Activated CD4-positive, alpha-beta T cell treated with anti-CD3 and anti-CD28 coated beads, Interleukin-2, amount 10 ng/mL, durations not matched to agents 24 days and 14 days (primary cell): ENCODE measurements at regions of chr12 and their contacts with region 1.

Region 1: DNA sequence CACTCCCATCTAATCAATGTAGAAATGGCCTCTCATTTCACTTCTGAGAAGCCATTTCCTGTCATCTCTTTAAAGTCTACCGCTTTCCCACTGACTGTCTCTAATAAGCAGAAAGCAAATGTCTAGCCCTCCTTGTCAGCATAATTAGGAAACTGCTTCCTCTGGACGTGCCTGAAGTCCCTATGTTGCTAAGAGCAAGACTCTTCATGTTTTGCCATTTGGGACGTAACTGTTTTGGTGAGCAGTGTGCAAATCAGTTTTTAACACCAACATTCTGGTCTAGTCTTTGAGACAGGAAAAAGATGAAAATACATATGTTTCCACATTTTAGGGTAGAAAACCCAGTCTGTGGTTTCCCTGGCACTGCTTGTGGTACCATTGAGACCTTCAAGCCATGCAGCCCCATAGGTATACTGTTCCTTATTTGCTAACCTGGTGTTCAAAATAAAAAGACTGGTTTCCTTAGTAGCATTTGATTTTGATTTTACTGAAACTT is 22.2 kb downstream of the IFNG start:
- DNase-seq: peak; percentile 65
- H3K4me3 Mint-ChIP-seq: peak overlapping the region; percentile 53
- H3K27ac Mint-ChIP-seq: peak overlapping the region; percentile 89
- H3K4me1 Mint-ChIP-seq: peaks cover 65% of the 10 kb centered on the region
- H3K27me3 Mint-ChIP-seq: no peaks in the 10 kb centered on the region

Region 2: DNA sequence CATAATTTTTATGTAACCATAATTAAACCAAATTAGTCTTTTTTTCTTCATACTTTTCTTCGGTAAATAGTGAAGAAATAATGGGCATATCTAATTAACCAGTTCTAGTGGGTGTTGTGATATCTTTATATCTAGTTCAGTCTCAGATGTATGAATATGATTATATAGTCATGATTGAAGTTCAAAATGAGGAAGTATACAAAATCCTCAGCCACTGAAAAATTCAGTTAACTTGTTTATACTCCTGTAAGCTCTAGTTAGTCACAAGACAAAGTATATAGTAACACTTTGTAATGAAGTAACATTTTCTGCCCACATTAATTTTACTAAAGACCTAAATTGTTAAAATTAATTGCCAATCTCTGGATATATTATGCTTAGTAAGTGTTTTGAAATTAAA is 821.7 kb before region 1 on chr12:
- intact Hi-C with region 1: no loop called
- DNase-seq: no peak
- H3K4me3 Mint-ChIP-seq: no peak overlapping the region
- H3K27ac Mint-ChIP-seq: no peak overlapping the region
- H3K4me1 Mint-ChIP-seq: peaks cover 6% of the 10 kb centered on the region
- H3K27me3 Mint-ChIP-seq: no peaks in the 10 kb centered on the region

Region 3: GRCh38 chr12:68080577-68080976 is 56.8 kb before region 1 on chr12:
- intact Hi-C with region 1: loop called (anchors 5 kb)
- DNase-seq: peak; percentile 79
- H3K4me3 Mint-ChIP-seq: peak overlapping the region; percentile 59
- H3K27ac Mint-ChIP-seq: peak overlapping the region; percentile 84
- H3K4me1 Mint-ChIP-seq: peaks cover 34% of the 10 kb centered on the region
- H3K27me3 Mint-ChIP-seq: no peaks in the 10 kb centered on the region

Region 4: DNA sequence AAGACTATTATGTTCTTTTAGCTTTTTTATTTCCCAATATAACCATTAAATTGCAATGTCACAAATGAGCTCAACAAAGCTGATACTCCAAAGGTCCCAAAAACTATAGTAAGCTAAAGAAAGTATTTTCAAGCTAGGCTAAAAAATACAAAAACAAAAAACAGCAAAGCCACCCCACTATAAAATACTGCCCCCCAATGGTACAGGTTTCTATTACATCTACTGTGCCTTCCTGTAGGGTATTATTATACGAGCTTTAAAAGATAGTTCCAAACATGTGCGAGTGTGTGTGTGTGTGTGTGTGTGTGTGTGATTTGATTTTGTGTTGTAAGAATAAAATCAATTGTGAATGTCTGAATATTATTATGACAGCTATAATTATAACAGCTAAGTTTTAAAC is 21.0 kb after region 1 on chr12:
- intact Hi-C with region 1: loop called (anchors 1 kb)
- DNase-seq: peak; percentile 81
- H3K4me3 Mint-ChIP-seq: peak overlapping the region; percentile 61
- H3K27ac Mint-ChIP-seq: peak overlapping the region; percentile 77
- H3K4me1 Mint-ChIP-seq: peaks cover 32% of the 10 kb centered on the region
- H3K27me3 Mint-ChIP-seq: no peaks in the 10 kb centered on the region

Region 5: DNA sequence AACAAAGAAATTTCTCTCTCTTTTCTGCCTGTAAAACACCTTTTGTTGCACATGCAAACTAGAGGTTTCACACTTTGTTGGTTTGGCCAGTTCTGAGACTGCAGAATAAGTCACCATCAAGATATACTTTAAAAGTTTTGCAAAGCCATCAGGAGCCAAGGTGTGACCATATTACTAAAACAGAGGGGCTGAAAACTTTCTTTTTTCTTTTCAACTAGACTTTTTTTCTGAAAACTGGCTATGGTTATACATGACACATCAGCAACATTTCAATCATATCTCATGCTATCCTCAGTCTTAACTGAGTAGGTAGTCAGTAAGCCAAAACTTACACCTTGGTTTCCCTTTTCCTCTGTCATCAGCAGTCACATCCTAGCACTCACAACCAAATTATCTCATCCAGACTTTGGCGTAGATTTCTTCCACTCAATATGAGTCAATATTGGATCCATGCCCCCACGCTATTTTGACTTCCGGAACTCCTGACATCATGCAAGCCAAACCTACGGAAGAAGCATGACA is 26.2 kb after region 1 on chr12:
- intact Hi-C with region 1: loop called (anchors 1 kb)
- DNase-seq: no peak
- H3K4me3 Mint-ChIP-seq: peak overlapping the region; percentile 31
- H3K27ac Mint-ChIP-seq: peak overlapping the region; percentile 73
- H3K4me1 Mint-ChIP-seq: peaks cover 17% of the 10 kb centered on the region
- H3K27me3 Mint-ChIP-seq: peaks cover 2% of the 10 kb centered on the region

Region 6: GRCh38 chr12:68290126-68290525 is 152.7 kb after region 1 on chr12:
- intact Hi-C with region 1: loop called (anchors 1 kb)
- DNase-seq: peak; percentile 80
- H3K4me3 Mint-ChIP-seq: peak overlapping the region; percentile 19
- H3K27ac Mint-ChIP-seq: peak overlapping the region; percentile 55
- H3K4me1 Mint-ChIP-seq: peaks cover 43% of the 10 kb centered on the region
- H3K27me3 Mint-ChIP-seq: peaks cover 5% of the 10 kb centered on the region

Region 7: DNA sequence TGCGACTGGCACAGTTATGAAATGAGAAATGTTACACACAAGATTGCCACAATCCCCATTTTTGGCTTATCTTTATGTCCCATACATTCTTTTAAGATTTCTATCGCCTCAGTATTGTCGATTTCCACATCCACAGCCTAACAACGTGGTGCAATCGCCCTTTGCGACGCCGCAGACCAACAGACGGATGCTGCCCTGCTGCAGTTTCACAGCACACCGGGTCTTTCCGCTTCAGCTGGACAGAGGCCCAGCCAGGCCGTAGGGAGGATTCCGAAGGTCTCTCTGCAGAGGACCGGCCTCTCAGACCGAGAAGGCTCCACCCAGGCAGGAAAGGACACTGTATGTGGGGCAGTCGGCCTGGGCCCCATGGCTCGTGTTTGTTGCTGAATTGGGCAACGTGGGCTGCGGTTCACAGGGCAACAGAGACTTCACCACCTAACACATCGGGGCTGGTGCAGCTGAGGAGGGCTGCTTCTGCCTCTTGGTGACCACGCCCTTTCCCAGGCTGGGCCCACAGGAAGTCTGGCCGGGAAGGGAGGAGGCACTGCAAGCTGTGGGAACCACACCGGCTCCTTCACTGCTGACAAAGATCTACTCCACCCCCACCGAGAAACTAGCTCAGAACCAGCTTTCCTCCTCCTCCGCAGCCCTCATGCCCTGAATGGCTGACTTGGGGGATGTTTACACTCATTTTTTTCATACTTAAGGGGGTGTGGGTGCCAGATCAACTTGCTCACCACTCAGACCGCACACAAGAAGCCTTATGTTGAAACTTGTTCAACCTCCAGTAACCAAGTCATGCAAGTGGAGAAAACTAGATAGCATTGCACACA is 227.7 kb after region 1 on chr12:
- intact Hi-C with region 1: loop called (anchors 5 kb)
- DNase-seq: peak; percentile 95
- H3K4me3 Mint-ChIP-seq: peak overlapping the region; percentile 83
- H3K27ac Mint-ChIP-seq: peak overlapping the region; percentile 95
- H3K4me1 Mint-ChIP-seq: peaks cover 56% of the 10 kb centered on the region
- H3K27me3 Mint-ChIP-seq: no peaks in the 10 kb centered on the region